ENCODE measurements at regions of chr14 and their contacts with region 1.

Region 1: GRCh38 chr14:101791919-101792572 is 30.5 kb downstream of the PPP2R5C start:
- DNase-seq: no peak
- ATAC-seq: peak; percentile 64
- H3K4me3 Mint-ChIP-seq: peak overlapping the region; percentile 36
- H3K27ac Mint-ChIP-seq: peak overlapping the region; percentile 36
- H3K4me1 Mint-ChIP-seq: peaks cover 23% of the 10 kb centered on the region
- H3K27me3 Mint-ChIP-seq: no peaks in the 10 kb centered on the region
- CTCF ChIP-seq: no peak

Region 2: GRCh38 chr14:101761032-101761880 is 30.8 kb before region 1 on chr14 and contains the start of gene PPP2R5C:
- CTCF ChIA-PET with region 1: no interaction called
- POLR2A ChIA-PET with region 1: no interaction called
- intact Hi-C with region 1: no loop called
- DNase-seq: peak; percentile 81
- ATAC-seq: peak; percentile 63
- H3K4me3 Mint-ChIP-seq: peak within 1 kb of the TSS; percentile 88
- H3K27ac Mint-ChIP-seq: peak within 1 kb of the TSS; percentile 77
- H3K4me1 Mint-ChIP-seq: peaks cover 18% of the 10 kb centered on the region
- H3K27me3 Mint-ChIP-seq: no peaks in the 10 kb centered on the region
- CTCF ChIP-seq: no peak
- total RNA-seq, gene PPP2R5C: 197 and 227 TPM in 2 replicates

Region 3: GRCh38 chr14:101781240-101782061 is 10.6 kb before region 1 on chr14:
- CTCF ChIA-PET with region 1: no interaction called
- POLR2A ChIA-PET with region 1: interaction called, 6 read pairs
- intact Hi-C with region 1: loop called (anchors 1 kb)
- DNase-seq: no peak
- ATAC-seq: peak; percentile 61
- H3K4me3 Mint-ChIP-seq: peak overlapping the region; percentile 73
- H3K27ac Mint-ChIP-seq: no peak overlapping the region
- H3K4me1 Mint-ChIP-seq: peaks cover 34% of the 10 kb centered on the region
- H3K27me3 Mint-ChIP-seq: peaks cover 1% of the 10 kb centered on the region
- CTCF ChIP-seq: no peak

Measured in activated B cell treated with CpG ODN at 0.5 μM for 24 hours (primary cell).